ENCODE measurements at regions of chr4 and their contacts with region 1.

Region 1: GRCh38 chr4:138870737-138871554 is 144.6 kb upstream of the NOCT start:
- DNase-seq: peak; percentile 67
- CTCF ChIP-seq: peak; percentile 81

Region 2: GRCh38 chr4:138035781-138036258 is 835.1 kb before region 1 on chr4:
- CTCF ChIA-PET with region 1: interaction called, 13 read pairs
- POLR2A ChIA-PET with region 1: no interaction called
- DNase-seq: peak; percentile 56
- CTCF ChIP-seq: peak; percentile 50

Region 3: GRCh38 chr4:138639018-138639741 is 231.8 kb before region 1 on chr4:
- CTCF ChIA-PET with region 1: no interaction called
- POLR2A ChIA-PET with region 1: no interaction called
- DNase-seq: no peak
- CTCF ChIP-seq: no peak

Region 4: DNA sequence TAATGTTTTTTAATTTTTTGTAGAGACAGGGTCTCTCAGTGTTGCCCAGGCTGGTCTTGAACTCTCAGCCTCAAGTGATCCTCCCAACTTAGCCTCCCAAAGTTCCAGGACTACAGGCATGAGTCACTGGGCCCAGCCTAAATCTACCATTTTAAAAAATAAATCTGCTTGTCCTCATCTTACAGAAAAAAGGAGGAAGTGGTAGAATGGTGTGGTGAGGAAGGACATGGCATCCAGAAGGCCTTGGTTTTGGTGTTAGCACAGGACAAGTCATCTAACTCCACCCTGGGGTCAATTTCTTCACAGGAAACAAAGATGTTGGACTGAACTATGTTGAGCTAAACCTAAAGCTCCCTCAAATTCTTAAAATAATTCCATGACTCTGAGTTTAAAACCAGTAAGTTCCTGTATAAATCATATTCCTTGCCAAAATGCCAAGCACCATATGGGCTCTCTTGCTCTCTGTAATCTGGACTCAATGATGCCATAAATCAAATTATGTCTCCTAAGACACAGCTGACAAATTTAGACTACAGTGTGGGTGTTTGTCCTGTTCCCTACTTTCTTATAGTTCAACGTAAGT is 109.2 kb before region 1 on chr4:
- CTCF ChIA-PET with region 1: no interaction called
- POLR2A ChIA-PET with region 1: no interaction called
- DNase-seq: no peak
- CTCF ChIP-seq: no peak

Region 5: GRCh38 chr4:138889216-138889615 is 18.3 kb after region 1 on chr4:
- CTCF ChIA-PET with region 1: interaction called, 11 read pairs
- POLR2A ChIA-PET with region 1: no interaction called
- DNase-seq: no peak
- CTCF ChIP-seq: no peak

Region 6: DNA sequence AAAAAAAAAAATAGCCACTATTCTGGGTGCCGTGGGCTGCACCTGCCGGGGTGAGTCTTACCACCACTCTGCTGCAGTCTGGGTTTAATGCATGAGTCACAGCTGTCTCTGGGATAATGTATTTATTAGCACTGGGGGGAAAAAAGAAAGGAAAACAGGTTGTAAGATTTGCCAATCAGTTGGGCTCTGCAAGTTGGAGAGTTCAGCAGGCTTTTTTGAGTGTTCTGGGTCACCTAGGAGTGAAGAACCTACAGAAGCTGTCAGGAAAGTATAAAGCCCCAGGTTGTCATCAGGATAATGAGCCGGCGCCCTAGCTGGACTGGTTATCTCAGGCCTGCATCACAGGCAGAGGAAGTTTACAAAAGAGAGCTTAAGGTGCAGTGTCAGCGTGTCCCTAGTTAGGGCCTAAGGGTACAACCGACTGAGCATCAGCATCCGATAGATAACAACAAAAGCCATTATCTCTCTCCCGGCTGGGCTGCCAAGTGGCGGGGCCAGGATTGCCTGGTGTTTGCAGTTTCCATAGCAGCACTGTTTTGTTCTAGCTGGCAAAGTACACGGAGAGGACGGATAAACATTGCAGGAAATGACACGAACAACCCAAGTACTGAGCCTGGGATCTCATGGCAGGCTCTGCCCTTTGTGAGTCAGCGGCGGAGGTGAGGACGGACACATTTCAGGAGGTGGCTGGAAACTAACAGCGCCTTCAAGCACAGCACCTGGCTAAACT is 39.8 kb after region 1 on chr4:
- CTCF ChIA-PET with region 1: interaction called, 14 read pairs
- POLR2A ChIA-PET with region 1: no interaction called
- DNase-seq: no peak
- CTCF ChIP-seq: no peak

Region 7: GRCh38 chr4:138916763-138917162 is 45.8 kb after region 1 on chr4:
- CTCF ChIA-PET with region 1: interaction called, 14 read pairs
- POLR2A ChIA-PET with region 1: no interaction called
- DNase-seq: no peak
- CTCF ChIP-seq: no peak

Region 8: DNA sequence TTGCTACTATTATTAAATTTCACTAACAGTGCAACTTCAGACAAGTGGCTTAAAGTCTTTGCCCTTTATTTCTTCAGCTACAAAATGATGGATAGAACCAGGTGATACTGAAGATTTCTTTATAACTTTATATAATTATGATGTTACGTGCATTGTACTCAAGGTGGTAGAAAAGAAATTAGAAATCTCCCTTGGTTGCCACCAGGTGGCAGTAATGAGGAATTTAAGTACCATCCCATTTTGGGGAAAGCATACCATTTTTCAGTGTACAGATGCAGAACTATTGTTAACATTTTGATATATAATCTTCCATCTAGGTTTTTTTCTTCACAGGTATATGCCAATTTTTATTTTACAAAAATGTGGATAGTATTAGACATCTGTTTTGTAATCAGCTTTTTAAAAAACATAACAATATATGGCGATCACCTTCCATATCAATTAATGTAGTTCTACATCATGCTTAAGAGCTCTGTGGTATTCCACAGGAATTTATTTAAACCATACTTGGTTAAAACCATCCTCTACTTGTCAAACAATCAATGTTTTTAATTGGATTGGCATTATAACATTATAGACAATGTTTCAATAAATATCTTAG is 545.2 kb after region 1 on chr4:
- CTCF ChIA-PET with region 1: no interaction called
- POLR2A ChIA-PET with region 1: no interaction called
- DNase-seq: peak; percentile 33
- CTCF ChIP-seq: peak; percentile 61